ENCODE measurements at regions of chr16 and their contacts with region 1.

Region 1: GRCh38 chr16:75392911-75393310 is 40.4 kb downstream of the CFDP1 start:
- DNase-seq: no peak
- H3K4me3 ChIP-seq: no peak overlapping the region
- CTCF ChIP-seq: no peak

Region 2: GRCh38 chr16:75379911-75380847 is 12.7 kb before region 1 on chr16:
- CTCF ChIA-PET with region 1: interaction called, 19 read pairs
- POLR2A ChIA-PET with region 1: no interaction called
- DNase-seq: no peak
- H3K4me3 ChIP-seq: no peak overlapping the region
- CTCF ChIP-seq: no peak

Region 3: GRCh38 chr16:75491876-75492275 is 99.0 kb after region 1 on chr16:
- CTCF ChIA-PET with region 1: no interaction called
- POLR2A ChIA-PET with region 1: no interaction called
- DNase-seq: no peak
- H3K4me3 ChIP-seq: no peak overlapping the region
- CTCF ChIP-seq: no peak

Measured in AG04449 (cell line).